ENCODE measurements at regions of chr10 and their contacts with region 1.

Region 1: GRCh38 chr10:50224330-50224952 is 26.9 kb downstream of the ASAH2 start:
- DNase-seq: no peak
- H3K4me3 Mint-ChIP-seq: no peak overlapping the region
- H3K27ac Mint-ChIP-seq: no peak overlapping the region
- H3K4me1 Mint-ChIP-seq: peaks cover 5% of the 10 kb centered on the region
- H3K27me3 Mint-ChIP-seq: peaks cover 34% of the 10 kb centered on the region

Region 2: DNA sequence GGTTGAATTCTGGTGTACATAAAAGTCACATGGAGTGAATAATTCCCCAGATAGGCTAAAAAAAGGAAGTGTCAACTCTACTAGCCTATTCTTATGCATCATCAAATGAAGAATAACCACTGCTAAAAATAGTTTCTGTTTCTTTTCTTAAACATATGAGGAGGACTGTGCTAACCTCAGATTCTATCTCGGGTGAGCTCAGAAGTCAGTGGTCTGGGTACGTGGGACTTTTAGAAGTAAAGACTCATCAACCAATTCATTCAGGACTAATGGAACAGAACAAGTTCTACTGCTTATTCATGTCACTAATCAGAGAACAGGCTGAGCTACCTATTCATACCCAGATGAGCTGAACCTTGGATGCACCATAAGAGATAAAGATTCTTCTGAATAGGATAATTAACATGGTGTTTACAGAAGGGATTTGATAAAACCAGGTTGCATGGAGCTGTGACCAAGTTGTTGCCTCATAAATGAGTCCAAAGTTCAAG is 36.4 kb after region 1 on chr10:
- intact Hi-C with region 1: loop called (anchors 2 kb)
- DNase-seq: no peak
- H3K4me3 Mint-ChIP-seq: no peak overlapping the region
- H3K27ac Mint-ChIP-seq: peak overlapping the region; percentile 23
- H3K4me1 Mint-ChIP-seq: peaks cover 20% of the 10 kb centered on the region
- H3K27me3 Mint-ChIP-seq: peaks cover 27% of the 10 kb centered on the region

Region 3: GRCh38 chr10:50322077-50322476 is 97.6 kb after region 1 on chr10:
- intact Hi-C with region 1: no loop called
- DNase-seq: no peak
- H3K4me3 Mint-ChIP-seq: no peak overlapping the region
- H3K27ac Mint-ChIP-seq: no peak overlapping the region
- H3K4me1 Mint-ChIP-seq: peaks cover 71% of the 10 kb centered on the region
- H3K27me3 Mint-ChIP-seq: no peaks in the 10 kb centered on the region

Region 4: DNA sequence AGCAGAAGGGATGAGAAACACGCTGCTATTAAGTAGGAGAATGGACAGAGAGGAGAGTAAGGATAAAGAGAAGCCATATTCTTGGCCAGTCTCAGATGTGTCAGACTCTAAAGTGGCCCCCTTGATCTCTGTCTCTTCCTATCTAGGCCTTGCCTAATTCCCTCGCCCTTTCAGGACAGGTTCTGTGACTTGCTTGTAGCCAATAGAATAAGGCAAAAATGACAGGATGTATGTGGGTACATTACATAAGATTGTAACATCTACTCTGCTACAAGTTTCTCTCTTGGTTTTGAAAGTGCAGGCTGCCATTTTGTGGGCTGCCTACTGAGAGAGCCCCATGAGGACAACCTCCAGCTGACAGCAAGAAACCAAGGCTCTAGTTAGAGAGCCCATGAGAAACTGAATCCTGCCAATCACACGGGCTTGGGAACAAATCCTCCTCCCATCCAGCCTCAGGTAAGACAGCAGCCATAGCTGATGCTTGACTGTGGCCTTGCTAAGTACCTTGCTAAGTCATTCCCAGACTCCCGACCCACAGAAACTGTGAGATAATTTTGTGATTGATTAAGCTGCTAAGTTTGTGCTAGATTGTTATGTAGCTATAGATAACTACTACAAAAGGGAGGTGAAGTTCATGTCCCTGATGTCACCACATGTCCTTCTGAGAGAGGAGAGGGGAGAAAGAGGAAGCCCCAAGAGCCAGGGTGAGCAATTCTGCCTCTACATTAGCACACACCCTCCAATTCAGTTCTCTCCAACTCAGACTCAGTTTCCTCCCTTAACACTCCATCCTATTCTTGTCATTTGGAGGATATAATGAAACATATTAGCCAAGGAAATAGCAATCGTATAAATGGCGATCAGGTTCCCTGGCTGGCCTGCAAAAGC is 213.9 kb after region 1 on chr10:
- intact Hi-C with region 1: no loop called
- DNase-seq: no peak
- H3K4me3 Mint-ChIP-seq: no peak overlapping the region
- H3K27ac Mint-ChIP-seq: no peak overlapping the region
- H3K4me1 Mint-ChIP-seq: peaks cover 48% of the 10 kb centered on the region
- H3K27me3 Mint-ChIP-seq: no peaks in the 10 kb centered on the region